Sigmoid colon (tissue), 7 donors: ENCODE measurements at regions of chr2 and their contacts with region 1.

Region 1: GRCh38 chr2:102141970-102142828 is at the start of gene IL1R1:
- DNase-seq: peak; percentile 90
- H3K4me3 ChIP-seq: peak within 1 kb of the TSS; percentile 50 to 71 (median 62)
- H3K27ac ChIP-seq: peak within 1 kb of the TSS; percentile 82 to 88 (median 86)
- H3K4me1 ChIP-seq: peaks cover 0 to 18% (median 6%) of the 10 kb centered on the region in 4 donors
- H3K27me3 ChIP-seq: no peaks in the 10 kb centered on the region
- CTCF ChIP-seq: no peak
- EP300 ChIP-seq: no peak
- POLR2A ChIP-seq: peak in 1 of 2 donors; percentile 34
- total RNA-seq, gene IL1R1: 41.0 to 144 (median 50.7) TPM

Region 2: DNA sequence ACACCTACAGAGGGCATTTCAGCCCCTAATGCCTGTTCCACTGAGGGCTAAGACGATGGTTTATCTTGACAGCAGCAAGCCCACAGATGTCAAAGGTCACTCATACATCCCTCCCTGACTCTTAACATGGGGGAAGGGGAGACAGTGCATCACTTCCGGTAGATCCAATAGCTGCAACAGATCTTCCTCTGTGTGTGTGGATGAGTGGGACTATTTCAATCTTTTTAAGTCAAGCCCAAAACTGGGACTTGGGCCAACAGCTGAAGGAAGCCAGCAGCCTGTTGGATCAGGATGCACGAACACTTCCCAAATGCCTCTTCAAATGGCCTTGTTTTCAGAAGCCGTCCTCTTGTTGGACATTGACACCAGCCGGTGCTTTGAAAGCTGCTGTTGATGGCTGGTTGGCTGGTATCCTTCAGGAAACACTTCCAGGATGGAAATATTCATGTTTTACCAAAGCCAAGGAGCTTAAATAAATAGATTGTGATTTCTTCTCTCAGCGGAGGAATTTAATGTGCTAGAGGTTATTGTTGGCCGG is 91.3 kb before region 1 on chr2:
- intact Hi-C with region 1: loop called (anchors 5 kb)
- DNase-seq: peak; percentile 97
- H3K4me3 ChIP-seq: no peak overlapping the region
- H3K27ac ChIP-seq: peak overlapping the region; percentile 76 to 89 (median 82)
- H3K4me1 ChIP-seq: peaks cover 0 to 51% (median 43%) of the 10 kb centered on the region in 4 donors
- H3K27me3 ChIP-seq: no peaks in the 10 kb centered on the region
- CTCF ChIP-seq: no peak
- EP300 ChIP-seq: peak in 3 of 4 donors; percentile 32 to 76 (median 50)
- POLR2A ChIP-seq: no peak

Region 3: DNA sequence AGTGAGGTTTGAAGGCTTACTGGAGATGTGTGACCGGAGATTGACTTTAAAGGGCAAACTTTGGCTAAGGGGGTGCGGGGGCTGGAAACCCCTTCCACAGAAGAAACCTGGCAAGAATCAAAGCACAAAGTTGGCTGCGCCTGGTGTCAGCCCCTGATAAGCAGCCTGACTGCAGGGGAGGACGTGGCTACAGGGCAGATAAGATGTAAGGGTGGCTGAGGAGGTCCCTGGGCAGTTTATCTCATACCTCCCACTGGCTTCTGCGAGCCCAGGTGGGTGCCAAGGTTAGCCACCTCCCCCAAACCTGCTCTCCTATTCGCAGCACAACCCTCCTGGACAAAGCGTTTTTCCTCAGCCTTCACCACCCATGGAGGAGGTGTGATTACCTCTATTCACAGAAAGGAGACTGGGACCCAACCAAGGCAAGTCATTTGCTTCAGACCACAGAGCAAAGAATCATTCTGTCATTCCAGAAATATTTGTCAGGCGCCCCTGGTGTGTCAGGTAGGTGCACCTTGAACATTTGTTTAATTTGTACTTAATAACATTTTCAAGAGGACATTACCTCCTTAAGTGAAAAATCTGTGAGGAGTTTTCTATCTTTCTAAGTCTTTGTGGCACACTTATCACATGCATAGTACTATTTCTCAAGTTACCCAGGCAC is 72.8 kb before region 1 on chr2:
- intact Hi-C with region 1: loop called (anchors 2 kb)
- DNase-seq: no peak
- H3K4me3 ChIP-seq: no peak overlapping the region
- H3K27ac ChIP-seq: peak overlapping the region; percentile 6 to 72 (median 68)
- H3K4me1 ChIP-seq: peaks cover 0 to 43% (median 33%) of the 10 kb centered on the region in 4 donors
- H3K27me3 ChIP-seq: no peaks in the 10 kb centered on the region
- CTCF ChIP-seq: no peak
- EP300 ChIP-seq: no peak
- POLR2A ChIP-seq: no peak

Region 4: GRCh38 chr2:102103992-102104871 is 38.0 kb before region 1 on chr2:
- intact Hi-C with region 1: loop called (anchors 2 kb)
- DNase-seq: peak; percentile 92
- H3K4me3 ChIP-seq: peak overlapping the region; percentile 22 to 41 (median 36)
- H3K27ac ChIP-seq: peak overlapping the region; percentile 60 to 81 (median 72)
- H3K4me1 ChIP-seq: peaks cover 0 to 51% (median 20%) of the 10 kb centered on the region in 4 donors
- H3K27me3 ChIP-seq: no peaks in the 10 kb centered on the region
- CTCF ChIP-seq: no peak
- EP300 ChIP-seq: no peak
- POLR2A ChIP-seq: no peak

Region 5: GRCh38 chr2:102166189-102166845 is 24.1 kb after region 1 on chr2:
- intact Hi-C with region 1: loop called (anchors 1 kb)
- DNase-seq: peak; percentile 77
- H3K4me3 ChIP-seq: no peak overlapping the region
- H3K27ac ChIP-seq: peak overlapping the region in 2 of 4 donors; percentile 30 to 52
- H3K4me1 ChIP-seq: peaks cover 0 to 16% (median 2%) of the 10 kb centered on the region in 4 donors
- H3K27me3 ChIP-seq: no peaks in the 10 kb centered on the region
- CTCF ChIP-seq: peak; percentile 71 to 78 (median 72)
- EP300 ChIP-seq: no peak
- POLR2A ChIP-seq: no peak